ENCODE measurements at regions of chrX and their contacts with region 1.

Region 1: DNA sequence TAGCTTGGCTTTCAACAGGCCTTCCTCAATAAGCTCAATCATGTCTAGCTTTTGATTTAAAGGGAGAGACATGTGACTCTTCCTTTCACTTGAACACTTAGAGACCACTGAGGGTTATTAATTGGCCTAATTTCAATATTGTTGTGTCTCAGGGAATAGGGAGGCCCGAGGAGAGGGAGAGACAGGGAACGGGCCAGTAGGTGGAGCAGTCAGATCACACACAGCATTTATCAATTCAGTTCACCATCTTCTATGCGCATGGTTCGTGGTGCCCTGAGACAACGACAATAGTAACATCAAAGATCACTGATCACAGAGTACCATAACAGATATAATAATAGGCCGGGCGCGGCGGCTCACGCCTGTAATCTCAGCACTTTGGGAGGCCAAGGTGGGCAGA is 17.8 kb downstream of the ZNF81 start:
- DNase-seq: peak; percentile 28
- ATAC-seq: peak; percentile 54

Region 2: DNA sequence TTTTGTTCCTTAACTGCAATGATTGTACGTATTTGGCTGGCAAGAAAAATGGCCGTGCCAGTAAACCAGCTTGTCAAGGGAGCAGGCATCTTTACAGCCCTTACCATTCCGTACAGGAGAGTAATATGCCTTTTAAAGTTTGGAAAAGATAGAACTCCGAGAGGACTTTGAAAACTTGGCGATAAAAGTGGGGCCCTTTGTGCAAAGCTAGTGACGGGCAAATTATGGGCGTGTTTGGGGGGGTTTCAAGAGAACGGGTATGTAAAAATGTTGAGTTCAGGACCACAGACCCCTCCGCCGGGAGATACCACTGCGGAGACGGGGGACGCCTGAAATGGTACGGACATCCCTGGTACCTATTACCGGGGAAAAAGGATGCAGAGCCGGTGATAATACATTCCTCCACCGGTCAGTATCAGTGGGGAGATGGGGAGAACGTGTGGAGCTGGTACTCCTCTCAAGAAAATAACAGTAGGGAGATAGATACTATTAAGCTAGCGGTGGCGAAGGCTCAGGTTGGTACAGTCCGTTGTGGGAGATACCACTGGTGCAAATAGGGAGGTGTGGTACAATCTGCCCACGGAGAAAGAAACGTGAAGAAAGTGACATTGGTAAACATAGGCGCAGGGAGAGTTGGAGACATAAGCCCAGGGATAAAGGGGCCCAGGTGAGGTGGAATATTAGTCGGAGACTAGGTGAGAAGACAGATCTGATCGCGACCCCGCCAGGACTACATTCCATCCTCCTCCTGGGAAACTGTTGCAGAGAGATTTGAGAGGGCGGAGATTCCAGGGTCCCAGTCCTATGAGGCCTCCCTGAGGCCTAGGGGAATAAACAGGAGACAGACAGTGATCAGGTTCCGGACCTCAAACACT is 166.8 kb after region 1 on chrX:
- intact Hi-C with region 1: loop called (anchors 10 kb)
- DNase-seq: peak; percentile 85
- ATAC-seq: peak; percentile 89